ENCODE measurements at regions of chr10 and their contacts with region 1.

Region 1: GRCh38 chr10:89369156-89370105 is 8.4 kb upstream of the IFIT1B start:
- DNase-seq: peak; percentile 46
- CTCF ChIP-seq: peak; percentile 70

Region 2: DNA sequence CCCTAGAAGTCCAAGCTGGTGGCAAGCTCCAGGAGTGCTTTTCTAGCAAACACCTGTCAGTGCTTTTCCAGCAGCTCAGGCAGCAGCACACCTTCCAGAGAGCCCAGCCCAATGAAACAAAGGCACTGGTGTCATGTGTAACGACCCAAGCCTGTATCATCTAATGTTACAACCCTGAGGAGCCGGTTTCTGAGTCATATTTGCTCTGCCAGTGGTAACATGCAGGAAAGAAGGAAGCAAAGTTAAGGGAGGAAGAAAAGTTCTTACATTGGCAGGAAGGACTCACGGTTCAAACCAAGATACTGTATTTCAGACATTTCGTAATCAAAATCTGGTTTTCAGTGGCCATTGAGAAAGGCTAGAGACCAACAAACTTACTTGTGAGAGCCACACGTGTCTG is 517.7 kb before region 1 on chr10 and contains the start of gene ANKRD22:
- CTCF ChIA-PET with region 1: no interaction called
- POLR2A ChIA-PET with region 1: no interaction called
- DNase-seq: no peak
- CTCF ChIP-seq: no peak

Region 3: DNA sequence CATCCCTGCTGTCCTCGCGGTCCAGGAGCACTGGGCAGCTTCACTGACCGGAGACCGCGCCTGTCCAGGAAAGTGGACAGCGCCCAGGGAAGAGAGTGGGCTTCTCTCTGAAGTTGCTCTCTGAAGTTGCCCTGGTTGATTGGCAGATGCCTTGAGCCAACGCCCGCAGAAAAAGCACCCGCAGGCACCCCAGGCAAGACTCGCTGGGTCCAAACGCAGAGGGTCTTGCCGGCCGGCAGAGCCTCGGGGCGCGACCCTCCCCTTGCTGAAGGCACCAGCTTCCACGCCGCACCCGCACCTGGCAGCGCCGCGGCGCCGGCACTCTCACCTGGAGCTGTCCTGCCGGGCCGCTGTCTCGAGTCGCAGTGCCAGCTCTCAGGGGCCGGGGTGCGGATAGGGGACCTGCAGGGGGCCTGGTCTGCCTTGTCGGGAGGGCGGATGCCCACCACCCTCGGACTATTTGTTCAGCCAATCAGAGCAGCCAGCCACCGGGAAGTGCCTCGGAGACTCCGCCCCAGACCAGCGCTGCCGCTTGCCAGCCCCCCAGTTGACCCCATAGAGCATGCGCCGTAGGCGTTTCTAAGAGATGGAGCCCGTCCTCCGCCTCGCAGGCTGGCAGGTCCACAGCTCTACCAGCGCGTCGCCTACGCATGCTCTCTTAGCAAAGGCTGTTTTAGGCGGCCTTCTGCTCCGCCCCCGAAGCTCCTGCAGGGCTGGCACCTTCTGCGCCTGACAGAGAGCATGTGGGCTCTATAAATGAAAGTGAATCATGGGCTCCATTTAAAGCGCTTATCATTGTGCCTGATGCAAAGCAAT is 117.8 kb before region 1 on chr10 and contains the start of gene LIPA:
- CTCF ChIA-PET with region 1: interaction called, 10 read pairs
- POLR2A ChIA-PET with region 1: no interaction called
- DNase-seq: peak; percentile 93
- CTCF ChIP-seq: no peak

Region 4: GRCh38 chr10:89337484-89337883 is 31.9 kb before region 1 on chr10:
- CTCF ChIA-PET with region 1: interaction called, 19 read pairs
- POLR2A ChIA-PET with region 1: no interaction called
- DNase-seq: no peak
- CTCF ChIP-seq: no peak

Region 5: DNA sequence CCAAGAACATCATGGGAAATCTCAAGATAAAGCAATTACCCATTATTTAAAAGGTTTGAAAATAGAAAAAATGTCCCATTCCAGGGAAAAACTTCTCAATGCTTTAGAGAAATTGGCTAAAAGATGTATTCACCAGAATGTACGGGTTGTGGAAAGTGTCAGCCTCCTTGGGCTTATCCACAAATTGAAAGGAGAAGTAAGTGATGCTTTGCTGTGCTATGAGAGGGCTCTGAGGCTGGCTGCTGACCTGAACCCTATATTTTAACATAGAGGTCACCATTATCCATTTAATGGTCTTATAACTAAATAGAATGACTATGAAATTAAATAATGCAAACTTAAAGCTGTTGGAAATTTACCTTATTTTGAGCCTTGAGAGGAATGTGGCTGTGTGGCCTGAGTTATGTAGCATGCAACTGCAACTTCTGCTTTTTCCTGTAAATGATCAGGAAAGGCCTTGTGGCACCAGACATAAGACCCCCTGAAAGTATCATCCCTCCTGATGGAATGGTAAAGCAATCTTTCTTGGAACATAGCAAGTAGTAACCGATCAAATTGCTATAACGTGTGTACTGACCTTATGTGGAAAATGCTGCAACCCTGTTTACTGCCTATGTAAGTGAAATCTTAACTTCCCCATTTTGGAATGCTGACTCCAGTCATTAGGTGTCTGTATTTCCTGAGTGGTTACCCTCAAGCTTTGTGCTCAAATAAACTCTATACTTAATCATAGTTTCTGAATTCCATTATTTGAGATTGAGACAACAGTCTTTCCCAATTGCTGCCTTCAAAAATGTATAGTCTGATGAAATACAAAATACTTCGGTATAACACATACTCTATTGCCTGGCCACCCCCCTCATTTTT is 15.3 kb after region 1 on chr10:
- CTCF ChIA-PET with region 1: interaction called, 24 read pairs
- POLR2A ChIA-PET with region 1: no interaction called
- DNase-seq: no peak
- CTCF ChIP-seq: no peak

Region 6: GRCh38 chr10:89414146-89414878 is 44.9 kb after region 1 on chr10 and contains the start of gene IFIT5:
- CTCF ChIA-PET with region 1: interaction called, 11 read pairs
- POLR2A ChIA-PET with region 1: no interaction called
- DNase-seq: peak; percentile 77
- CTCF ChIP-seq: no peak

Measured in GM10248 (cell line).